Heart left ventricle (tissue), 16 donors: ENCODE measurements at regions of chr3 and their contacts with region 1.

Region 1: GRCh38 chr3:65672871-65673815 is 365.6 kb downstream of the MAGI1 start:
- DNase-seq: peak; percentile 45 to 72 (median 59)
- ATAC-seq: peak in 3 of 4 donors; percentile 26 to 65 (median 55)
- H3K4me3 ChIP-seq: no peak overlapping the region
- H3K27ac ChIP-seq: no peak overlapping the region
- H3K4me1 ChIP-seq: peaks cover 0 to 26% (median 2%) of the 10 kb centered on the region in 12 donors
- H3K27me3 ChIP-seq: no peaks in the 10 kb centered on the region
- CTCF ChIP-seq: peak; percentile 65 to 91 (median 82)
- POLR2A ChIP-seq: no peak

Region 2: DNA sequence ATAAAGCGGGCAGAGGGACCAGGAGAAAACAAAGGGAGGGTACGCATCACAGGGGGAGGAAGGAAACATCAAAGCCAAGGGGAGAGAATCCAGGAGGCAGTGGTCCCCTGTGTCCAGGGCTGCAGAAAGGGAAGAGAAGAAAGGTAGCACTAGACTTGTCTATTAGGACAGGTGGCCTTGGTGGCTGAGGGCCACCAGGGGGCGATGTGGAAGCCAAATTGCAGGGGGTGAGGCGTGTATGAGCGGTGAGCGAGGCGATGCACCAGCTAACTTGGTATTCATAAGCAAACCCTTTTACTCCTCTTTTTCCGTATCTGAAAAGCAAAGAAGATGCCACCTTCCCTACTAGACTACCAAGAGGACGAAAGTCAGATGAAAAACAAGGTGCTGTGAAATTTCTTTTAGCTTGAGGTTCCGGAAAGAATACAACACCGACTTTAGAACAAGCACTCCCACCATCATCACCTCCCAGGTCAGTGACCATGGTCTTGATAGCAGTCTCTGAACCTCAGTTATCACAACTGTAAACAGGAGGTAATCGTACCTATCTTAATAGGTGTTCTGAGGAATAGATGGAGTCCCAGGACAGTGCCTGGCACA is 331.0 kb before region 1 on chr3:
- intact Hi-C with region 1: loop called in 1 of 10 experiments (anchors 10 kb)
- DNase-seq: peak in 4 of 5 donors; percentile 25 to 61 (median 37)
- ATAC-seq: peak in 3 of 4 donors; percentile 47 to 59 (median 50)
- H3K4me3 ChIP-seq: no peak overlapping the region
- H3K27ac ChIP-seq: no peak overlapping the region
- H3K4me1 ChIP-seq: peaks cover 0 to 23% (median 4%) of the 10 kb centered on the region in 12 donors
- H3K27me3 ChIP-seq: no peaks in the 10 kb centered on the region
- CTCF ChIP-seq: peak; percentile 29 to 64 (median 54)
- POLR2A ChIP-seq: no peak

Region 3: GRCh38 chr3:65439641-65440284 is 233.4 kb before region 1 on chr3:
- intact Hi-C with region 1: loop called (anchors 1 to 10 kb)
- DNase-seq: peak in 4 of 5 donors; percentile 47 to 69 (median 62)
- ATAC-seq: peak; percentile 80 to 91 (median 90)
- H3K4me3 ChIP-seq: no peak overlapping the region
- H3K27ac ChIP-seq: no peak overlapping the region
- H3K4me1 ChIP-seq: peaks cover 0 to 10% (median 6%) of the 10 kb centered on the region in 12 donors
- H3K27me3 ChIP-seq: no peaks in the 10 kb centered on the region
- CTCF ChIP-seq: peak; percentile 30 to 77 (median 64)
- POLR2A ChIP-seq: no peak

Region 4: GRCh38 chr3:65569845-65570405 is 103.2 kb before region 1 on chr3:
- intact Hi-C with region 1: loop called in 1 of 10 experiments (anchors 10 kb)
- DNase-seq: no peak
- ATAC-seq: no peak
- H3K4me3 ChIP-seq: no peak overlapping the region
- H3K27ac ChIP-seq: peak overlapping the region in 1 of 12 donors; percentile 60
- H3K4me1 ChIP-seq: peaks cover 0 to 29% (median 13%) of the 10 kb centered on the region in 12 donors
- H3K27me3 ChIP-seq: no peaks in the 10 kb centered on the region
- CTCF ChIP-seq: peak in 3 of 12 donors; percentile 15 to 28 (median 17)
- POLR2A ChIP-seq: no peak